Psoas muscle (tissue), 8 donors: ENCODE measurements at regions of chr1 and their contacts with region 1.

Region 1: DNA sequence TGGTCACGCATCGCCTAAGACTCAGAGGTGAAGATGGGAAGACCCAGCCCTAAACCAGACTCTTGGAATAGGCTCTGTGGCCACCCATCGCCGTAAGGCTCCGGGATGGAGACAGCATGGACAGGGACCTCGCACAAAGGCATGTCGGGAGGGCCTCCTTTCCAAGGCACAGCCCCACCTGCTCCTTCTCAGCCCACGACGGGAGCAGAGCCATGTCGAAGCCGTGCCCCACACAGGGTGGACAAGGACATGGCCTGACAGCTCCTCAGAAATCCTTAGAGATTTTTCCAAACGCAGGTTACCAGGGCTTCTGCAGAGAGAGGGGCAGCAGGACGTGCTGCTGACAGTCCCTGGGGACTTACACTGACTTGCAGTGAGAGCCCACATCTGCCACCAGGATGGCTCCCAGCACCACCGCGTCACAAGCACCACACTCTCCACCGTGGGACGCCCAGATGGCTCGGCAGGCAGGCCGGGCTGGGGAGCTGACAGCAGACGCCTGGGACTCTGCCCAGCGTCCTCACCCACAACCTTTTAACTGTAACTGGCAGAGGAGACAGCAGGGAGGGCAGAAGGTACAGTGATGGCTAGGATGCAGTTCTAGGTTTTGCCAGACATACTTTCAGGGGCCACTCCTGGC is 12.0 kb downstream of the SSU72 start:
- DNase-seq: no peak
- ATAC-seq: no peak
- H3K4me3 ChIP-seq: no peak overlapping the region
- H3K27ac ChIP-seq: no peak overlapping the region
- H3K4me1 ChIP-seq: peaks cover 21% of the 10 kb centered on the region
- H3K27me3 ChIP-seq: no peaks in the 10 kb centered on the region
- CTCF ChIP-seq: no peak

Region 2: GRCh38 chr1:1517973-1518620 is 44.6 kb before region 1 on chr1:
- intact Hi-C with region 1: loop called in 1 of 2 experiments (anchors 5 kb)
- DNase-seq: no peak
- ATAC-seq: no peak
- H3K4me3 ChIP-seq: no peak overlapping the region
- H3K27ac ChIP-seq: no peak overlapping the region
- H3K4me1 ChIP-seq: no peaks in the 10 kb centered on the region
- H3K27me3 ChIP-seq: no peaks in the 10 kb centered on the region
- CTCF ChIP-seq: no peak

Region 3: DNA sequence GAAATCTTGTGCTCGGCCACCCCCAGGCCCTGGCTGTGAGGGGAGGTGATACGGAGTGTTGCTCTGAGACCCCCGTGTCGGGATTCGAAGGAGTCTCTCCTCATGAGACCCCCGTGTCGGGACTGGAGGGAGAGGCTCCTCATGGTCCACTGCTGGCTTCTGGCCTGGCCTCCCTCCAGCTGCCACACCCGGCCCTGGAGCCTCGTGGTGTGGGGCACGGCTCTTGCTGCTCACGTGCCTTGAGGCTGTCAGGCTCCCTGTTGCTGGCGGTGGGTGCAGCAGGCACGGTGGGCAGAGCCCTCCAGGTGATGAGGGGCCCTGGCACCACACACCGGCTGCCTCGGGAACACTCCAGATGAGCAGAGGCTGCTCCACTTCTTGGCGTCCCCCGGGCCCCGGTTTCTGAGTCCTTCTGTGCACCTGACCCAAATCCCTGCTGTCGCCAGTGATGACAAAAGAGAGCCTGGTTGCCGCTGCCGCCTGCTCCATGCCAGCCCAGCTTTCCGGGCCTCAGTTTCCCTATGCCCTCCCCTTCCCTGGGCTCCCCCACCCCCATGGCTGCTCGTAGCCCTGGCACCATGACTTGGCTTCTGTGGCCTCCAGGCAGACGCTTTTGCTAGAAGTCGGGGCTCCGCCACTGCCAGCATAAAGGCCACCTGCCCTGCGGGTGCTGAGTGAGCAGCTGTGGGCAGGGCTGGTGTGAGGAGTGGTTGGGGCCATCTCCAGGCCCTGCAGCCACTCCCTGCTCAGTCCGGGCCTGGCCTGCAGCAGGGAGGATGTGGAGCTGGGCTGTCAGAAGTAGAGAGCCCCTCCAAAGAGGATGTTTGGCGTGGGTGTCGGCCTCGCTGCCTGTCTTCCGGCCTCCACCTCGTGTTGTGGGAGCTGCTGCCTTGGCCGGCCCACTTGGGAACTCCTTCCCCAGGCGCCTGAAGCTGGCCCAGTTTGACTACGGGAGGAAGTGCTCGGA is 34.1 kb before region 1 on chr1:
- intact Hi-C with region 1: no loop called
- DNase-seq: peak in 1 of 2 donors; percentile 49
- ATAC-seq: no peak
- H3K4me3 ChIP-seq: no peak overlapping the region
- H3K27ac ChIP-seq: no peak overlapping the region
- H3K4me1 ChIP-seq: peaks cover 4% of the 10 kb centered on the region
- H3K27me3 ChIP-seq: no peaks in the 10 kb centered on the region
- CTCF ChIP-seq: no peak